ENCODE measurements at regions of chr17 and their contacts with region 1.

Region 1: GRCh38 chr17:48586355-48587258 is 3.4 kb downstream of the HOXB3 start:
- DNase-seq: no peak
- H3K4me3 ChIP-seq: peak overlapping the region; percentile 76
- CTCF ChIP-seq: no peak

Region 2: DNA sequence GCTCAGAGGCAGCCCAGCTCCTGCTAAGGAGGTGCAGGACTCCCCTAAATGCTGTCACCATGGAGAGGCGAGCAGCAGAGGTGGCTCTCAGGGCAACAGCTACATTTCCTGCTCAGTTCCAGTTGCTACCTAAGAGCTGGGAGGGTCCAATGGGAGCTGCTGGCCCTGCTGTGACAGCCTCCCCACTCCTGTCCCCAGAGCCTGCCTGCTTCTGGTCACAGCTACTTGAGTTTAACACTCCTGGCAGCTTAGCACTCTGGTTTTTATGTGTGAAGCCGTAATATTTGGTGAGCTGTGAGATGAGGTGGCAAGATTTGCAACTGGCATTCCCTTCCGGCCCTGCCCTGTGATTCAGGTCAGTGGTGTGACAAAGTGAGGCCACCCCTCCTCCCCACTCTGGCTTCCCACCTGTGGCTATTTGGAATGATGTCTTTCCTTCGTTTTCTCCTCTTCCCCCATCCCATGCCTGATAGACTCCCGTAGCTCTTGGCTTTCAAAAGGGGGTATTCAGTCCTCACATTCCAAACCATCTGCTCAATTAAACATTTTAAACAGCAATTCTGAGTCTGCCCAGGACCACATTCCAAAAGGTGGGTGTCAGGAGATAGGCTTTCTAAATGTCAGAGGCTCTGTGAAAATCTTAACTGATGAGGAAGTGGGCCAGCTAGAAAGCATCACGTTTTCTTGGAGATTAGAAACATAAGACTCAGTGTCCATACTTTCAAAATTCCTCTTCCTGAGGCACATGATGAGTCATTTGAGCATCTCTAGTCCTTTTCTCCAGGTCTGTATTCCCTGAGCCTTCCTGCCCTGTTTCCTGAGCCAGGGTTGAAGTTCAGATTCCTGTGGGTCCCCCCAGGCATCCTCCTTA is 114.0 kb before region 1 on chr17:
- CTCF ChIA-PET with region 1: interaction called, 10 read pairs
- POLR2A ChIA-PET with region 1: interaction called, 5 read pairs
- DNase-seq: no peak
- H3K4me3 ChIP-seq: no peak overlapping the region
- CTCF ChIP-seq: no peak

Region 3: DNA sequence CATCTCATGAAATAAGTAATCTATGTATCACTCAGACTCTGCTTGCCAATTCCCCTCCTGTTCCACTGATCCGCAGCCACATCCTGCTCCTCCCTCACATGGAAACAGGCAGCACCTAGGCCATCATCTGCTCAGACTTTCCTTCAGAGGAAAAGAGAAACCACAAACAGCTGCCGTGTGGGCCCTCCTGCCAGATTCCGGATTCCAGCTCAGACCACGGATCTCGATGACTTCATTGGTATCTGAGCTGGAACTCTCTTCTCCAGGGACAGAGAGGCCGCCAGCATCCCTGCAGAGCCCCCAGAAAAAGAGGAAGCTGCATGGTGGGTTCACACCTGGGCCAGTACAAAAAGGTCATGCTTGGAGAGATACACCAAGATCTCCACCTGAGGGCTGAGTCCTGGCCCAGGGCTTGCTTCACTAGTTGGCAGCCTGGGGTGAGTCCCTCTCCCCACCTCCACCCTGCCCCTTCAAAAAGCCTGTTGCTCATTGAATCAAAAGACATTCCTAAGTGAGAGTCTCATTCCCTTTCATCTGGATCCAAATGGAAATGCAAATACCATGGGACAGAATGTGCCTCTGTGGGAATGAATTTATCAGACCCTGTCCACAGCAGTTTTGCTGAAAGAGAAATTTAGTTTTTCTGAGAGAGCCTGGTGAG is 103.0 kb before region 1 on chr17:
- CTCF ChIA-PET with region 1: interaction called, 4 read pairs
- POLR2A ChIA-PET with region 1: interaction called, 25 read pairs
- DNase-seq: peak; percentile 87
- H3K4me3 ChIP-seq: 0 out of 2 replicates have a peak overlapping the region, but pooled peaks have one; percentile 19
- CTCF ChIP-seq: no peak

Region 4: GRCh38 chr17:48492401-48493298 is 94.0 kb before region 1 on chr17:
- CTCF ChIA-PET with region 1: interaction called, 21 read pairs
- POLR2A ChIA-PET with region 1: interaction called, 10 read pairs
- DNase-seq: no peak
- H3K4me3 ChIP-seq: peak overlapping the region; percentile 45
- CTCF ChIP-seq: peak; percentile 90

Region 5: GRCh38 chr17:48528153-48528935 is 58.3 kb before region 1 on chr17:
- CTCF ChIA-PET with region 1: no interaction called
- POLR2A ChIA-PET with region 1: no interaction called
- DNase-seq: no peak
- H3K4me3 ChIP-seq: no peak overlapping the region
- CTCF ChIP-seq: no peak

Region 6: GRCh38 chr17:48543107-48543853 is 43.3 kb before region 1 on chr17:
- CTCF ChIA-PET with region 1: interaction called, 9 read pairs
- POLR2A ChIA-PET with region 1: interaction called, 14 read pairs
- DNase-seq: no peak
- H3K4me3 ChIP-seq: peak overlapping the region; percentile 84
- CTCF ChIP-seq: no peak

Region 7: DNA sequence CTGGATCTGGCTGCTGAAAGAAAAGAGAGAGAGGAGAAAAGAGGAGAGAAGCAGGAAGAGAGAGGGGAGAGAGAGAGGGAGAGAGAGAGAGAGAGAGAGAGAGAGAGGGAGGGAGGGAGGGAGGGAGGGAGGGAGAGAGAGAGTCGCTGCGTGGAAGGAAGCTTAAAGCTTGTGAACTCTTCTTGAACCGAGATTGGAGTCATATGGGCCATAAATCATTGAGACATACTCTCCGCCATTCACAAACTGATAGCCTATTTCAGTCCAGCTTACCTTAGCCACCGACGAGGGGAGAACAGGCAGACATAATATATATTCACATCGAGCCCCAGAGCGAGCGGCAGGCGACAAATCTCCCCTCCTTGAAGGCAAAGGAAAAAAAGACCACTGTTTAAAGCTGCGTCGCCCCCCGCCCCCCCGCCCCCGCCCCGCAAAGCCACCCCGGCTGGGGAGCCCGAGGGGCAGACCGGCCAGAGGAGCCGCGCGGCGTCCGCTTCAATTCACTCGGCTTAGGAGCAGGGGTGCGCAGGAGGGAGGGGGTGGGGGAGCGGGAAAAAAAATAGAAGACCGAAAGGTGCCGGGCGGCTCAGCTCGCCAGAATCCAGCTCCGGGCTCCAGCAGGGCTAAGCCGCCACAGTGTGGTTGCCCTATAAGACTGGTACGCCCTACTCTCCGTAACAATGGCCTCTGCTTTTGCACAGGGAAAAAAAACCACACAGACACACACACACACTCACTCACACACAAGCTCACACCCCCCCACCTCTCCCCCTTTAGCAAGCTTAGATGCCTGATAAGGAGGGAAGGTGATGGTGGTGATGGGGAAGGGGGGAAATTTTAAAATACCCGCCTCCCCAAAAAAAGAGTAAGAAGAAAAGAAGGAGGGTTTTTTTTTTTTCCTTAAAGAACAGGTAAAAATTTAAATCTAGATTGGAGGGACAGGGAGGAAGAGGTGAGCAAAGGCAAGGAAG is 31.1 kb before region 1 on chr17:
- CTCF ChIA-PET with region 1: interaction called, 8 read pairs
- POLR2A ChIA-PET with region 1: interaction called, 12 read pairs
- DNase-seq: peak; percentile 94
- H3K4me3 ChIP-seq: peak overlapping the region; percentile 56
- CTCF ChIP-seq: no peak

Region 8: DNA sequence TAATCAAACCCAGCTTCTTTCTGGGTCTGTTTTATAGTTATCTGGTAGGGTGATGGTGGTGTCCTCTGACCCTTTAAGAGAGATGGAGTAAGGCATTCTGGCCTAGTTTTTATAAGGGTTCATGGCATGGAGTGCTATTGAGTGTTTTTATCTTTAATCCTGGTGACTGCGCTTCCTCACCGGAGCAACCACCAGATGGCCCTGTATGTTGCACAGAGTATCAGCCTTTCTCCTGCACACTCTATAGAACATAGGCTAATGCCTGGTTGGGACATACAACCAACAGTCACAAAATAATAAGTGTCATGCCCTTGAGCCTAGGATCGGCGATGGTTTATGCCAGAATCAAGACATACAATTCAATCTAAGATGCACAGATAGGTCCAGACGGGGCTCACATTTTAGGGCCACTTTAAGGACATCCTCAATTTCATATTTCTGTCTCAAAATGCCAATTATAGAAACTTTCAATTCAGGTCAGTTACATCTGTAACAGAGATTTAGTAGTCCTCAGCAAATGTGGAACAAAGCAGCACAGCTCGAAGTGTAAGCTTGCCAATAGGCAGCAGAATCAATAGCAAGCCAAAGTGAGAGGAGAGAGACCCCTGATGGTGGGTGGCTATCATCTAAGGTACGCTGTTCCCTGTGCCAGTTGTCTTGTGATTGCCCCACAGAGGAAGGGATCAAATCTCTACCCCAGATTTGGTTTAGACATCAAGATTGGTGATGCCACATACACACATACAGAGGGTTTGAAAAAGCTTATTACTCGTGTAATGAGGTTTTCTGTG is 76.7 kb after region 1 on chr17:
- CTCF ChIA-PET with region 1: no interaction called
- POLR2A ChIA-PET with region 1: no interaction called
- DNase-seq: no peak
- H3K4me3 ChIP-seq: no peak overlapping the region
- CTCF ChIP-seq: peak; percentile 5

Region 9: GRCh38 chr17:49061524-49061943 is 474.9 kb after region 1 on chr17:
- CTCF ChIA-PET with region 1: no interaction called
- POLR2A ChIA-PET with region 1: no interaction called
- DNase-seq: no peak
- H3K4me3 ChIP-seq: no peak overlapping the region
- CTCF ChIP-seq: no peak

Measured in AG04449 (cell line).